WTC11 (cell line): ENCODE measurements at regions of chr12 and their contacts with region 1.

Region 1: DNA sequence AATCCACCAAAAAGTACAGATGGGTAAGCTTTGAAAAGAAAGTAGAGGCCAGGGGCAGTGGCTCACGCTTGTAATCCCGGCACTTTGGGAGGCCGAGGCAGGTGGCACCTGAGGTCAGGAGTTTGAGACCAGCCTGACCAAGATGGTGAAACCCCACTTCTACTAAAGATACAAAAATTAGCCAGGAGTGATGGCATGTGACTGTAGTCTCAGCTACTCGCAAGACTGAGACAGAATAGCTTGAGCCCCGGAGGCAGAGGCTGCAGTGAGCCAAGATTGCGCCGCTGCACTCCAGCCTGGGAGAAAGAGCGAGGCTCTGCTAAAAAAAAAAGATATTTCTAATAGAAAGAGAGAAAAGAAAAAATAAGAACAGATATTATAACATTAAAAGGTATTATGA is 134.2 kb upstream of the SLCO1C1 start:
- DNase-seq: no peak
- ATAC-seq: no peak
- H3K4me3 Mint-ChIP-seq: no peak overlapping the region
- H3K27ac Mint-ChIP-seq: no peak overlapping the region
- H3K4me1 Mint-ChIP-seq: no peaks in the 10 kb centered on the region
- H3K27me3 Mint-ChIP-seq: no peaks in the 10 kb centered on the region
- CTCF ChIP-seq: no peak

Region 2: DNA sequence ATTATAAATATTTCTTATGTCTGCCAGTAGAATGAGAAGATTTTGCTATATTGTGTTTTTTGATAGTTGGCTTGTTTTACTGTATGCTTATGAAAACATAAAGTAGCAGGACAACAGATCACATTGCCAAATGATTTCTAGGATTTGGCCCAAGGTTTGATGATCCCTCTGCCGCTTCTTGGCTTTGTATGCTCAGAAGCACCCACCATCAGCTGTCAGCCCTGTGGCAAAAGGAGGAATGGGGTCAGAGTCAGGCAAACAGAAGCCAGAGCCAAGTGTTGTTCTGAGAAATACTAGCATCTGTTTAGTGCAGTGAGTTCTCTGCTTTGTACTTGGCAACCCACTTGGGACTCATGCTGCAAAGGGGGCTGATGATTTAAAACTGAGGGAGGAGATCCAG is 40.4 kb before region 1 on chr12:
- CTCF ChIA-PET with region 1: no interaction called
- POLR2A ChIA-PET with region 1: no interaction called
- DNase-seq: no peak
- ATAC-seq: no peak
- H3K4me3 Mint-ChIP-seq: no peak overlapping the region
- H3K27ac Mint-ChIP-seq: no peak overlapping the region
- H3K4me1 Mint-ChIP-seq: peaks cover 39% of the 10 kb centered on the region
- H3K27me3 Mint-ChIP-seq: no peaks in the 10 kb centered on the region
- CTCF ChIP-seq: no peak

Region 3: DNA sequence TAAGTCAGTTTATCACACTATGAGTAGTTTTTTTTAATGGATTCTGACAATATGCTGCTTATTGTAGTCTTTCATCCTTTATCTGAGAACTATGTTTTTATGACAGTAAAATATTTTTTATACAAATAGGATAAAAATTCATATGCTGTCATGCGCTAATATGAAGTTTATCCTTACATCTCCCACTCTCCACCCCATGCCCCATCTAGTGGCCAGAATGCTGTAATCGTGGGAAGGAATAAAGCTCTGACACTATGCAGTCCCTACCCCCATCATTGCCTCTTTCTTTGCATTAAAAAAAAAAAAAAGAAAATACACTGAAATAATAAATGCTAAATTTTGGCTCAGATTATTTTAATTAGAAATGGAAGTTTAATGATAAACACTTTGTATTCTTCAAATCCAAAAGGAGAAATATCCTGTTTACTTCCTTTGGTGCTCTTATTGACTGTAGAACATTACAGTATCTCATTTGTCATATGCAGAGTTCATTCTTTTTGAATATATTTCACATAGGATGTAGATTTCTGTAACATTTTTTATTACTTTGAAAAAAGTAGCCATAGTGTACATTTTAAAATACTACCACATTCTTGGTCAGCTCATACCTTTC is 11.7 kb before region 1 on chr12:
- CTCF ChIA-PET with region 1: interaction called, 11 read pairs
- POLR2A ChIA-PET with region 1: no interaction called
- DNase-seq: peak; percentile 33
- ATAC-seq: peak; percentile 87
- H3K4me3 Mint-ChIP-seq: no peak overlapping the region
- H3K27ac Mint-ChIP-seq: no peak overlapping the region
- H3K4me1 Mint-ChIP-seq: no peaks in the 10 kb centered on the region
- H3K27me3 Mint-ChIP-seq: no peaks in the 10 kb centered on the region
- CTCF ChIP-seq: peak; percentile 31

Region 4: GRCh38 chr12:20620261-20620660 is 59.3 kb after region 1 on chr12:
- CTCF ChIA-PET with region 1: no interaction called
- POLR2A ChIA-PET with region 1: no interaction called
- DNase-seq: no peak
- ATAC-seq: no peak
- H3K4me3 Mint-ChIP-seq: no peak overlapping the region
- H3K27ac Mint-ChIP-seq: no peak overlapping the region
- H3K4me1 Mint-ChIP-seq: peaks cover 4% of the 10 kb centered on the region; the same call in 1 of the 2 replicates
- H3K27me3 Mint-ChIP-seq: no peaks in the 10 kb centered on the region
- CTCF ChIP-seq: no peak